ENCODE measurements at regions of chr11 and their contacts with region 1.

Region 1: GRCh38 chr11:18775492-18776292 is 15.9 kb downstream of the PTPN5 start:
- DNase-seq: peak; percentile 48
- H3K4me3 Mint-ChIP-seq: no peak overlapping the region
- H3K27ac Mint-ChIP-seq: no peak overlapping the region
- H3K4me1 Mint-ChIP-seq: peaks cover 23% of the 10 kb centered on the region
- H3K27me3 Mint-ChIP-seq: no peaks in the 10 kb centered on the region

Region 2: DNA sequence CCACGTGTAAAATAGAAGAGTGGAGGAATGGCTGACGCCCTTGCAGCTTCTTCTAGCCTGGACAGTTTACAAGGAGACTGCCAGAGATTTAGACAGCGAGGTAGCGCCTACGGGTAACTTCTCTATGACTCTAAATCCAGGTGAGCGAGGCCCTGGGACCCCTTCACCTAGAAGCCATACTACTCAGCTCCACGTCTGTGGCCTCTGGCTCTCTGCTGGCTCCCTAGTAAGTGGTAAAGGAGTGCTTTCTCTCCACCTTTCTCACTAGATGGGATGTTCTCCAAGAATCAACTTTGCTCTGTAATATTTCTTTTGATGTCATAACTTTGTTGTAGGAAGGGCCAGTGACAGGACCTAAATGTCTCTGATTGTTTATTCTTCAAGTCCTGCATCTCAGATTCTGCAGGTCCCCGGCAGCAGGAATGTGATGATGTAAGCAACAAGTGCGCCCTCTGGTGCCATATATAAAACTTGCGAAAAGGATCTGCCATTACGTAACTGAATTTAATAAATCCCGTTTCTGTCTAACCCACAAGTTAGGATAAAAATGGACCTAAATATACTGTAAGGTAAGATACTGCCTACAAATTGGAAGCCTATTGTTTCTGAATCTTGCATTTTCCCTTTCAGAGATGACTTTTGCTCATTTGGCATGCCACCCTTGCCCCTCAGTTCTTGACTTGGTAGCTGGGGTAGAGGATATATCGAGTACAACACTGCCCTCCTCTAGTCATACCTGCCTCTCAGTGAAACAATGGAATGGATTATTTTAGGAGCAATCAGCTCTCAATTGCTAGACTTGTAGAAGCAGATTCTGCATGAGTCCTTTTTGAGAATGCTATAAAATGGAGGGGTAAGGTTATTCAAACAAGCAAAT is 26.9 kb after region 1 on chr11:
- intact Hi-C with region 1: loop called (anchors 1 kb)
- DNase-seq: peak; percentile 19
- H3K4me3 Mint-ChIP-seq: no peak overlapping the region
- H3K27ac Mint-ChIP-seq: no peak overlapping the region
- H3K4me1 Mint-ChIP-seq: no peaks in the 10 kb centered on the region
- H3K27me3 Mint-ChIP-seq: peaks cover 38% of the 10 kb centered on the region

Region 3: GRCh38 chr11:18853086-18853720 is 77.5 kb after region 1 on chr11:
- intact Hi-C with region 1: loop called (anchors 5 kb)
- DNase-seq: no peak
- H3K4me3 Mint-ChIP-seq: no peak overlapping the region
- H3K27ac Mint-ChIP-seq: no peak overlapping the region
- H3K4me1 Mint-ChIP-seq: no peaks in the 10 kb centered on the region
- H3K27me3 Mint-ChIP-seq: peaks cover 17% of the 10 kb centered on the region

Measured in activated T-helper 2 cell treated with anti-CD3 and anti-CD28 coated beads, Interferon-gamma antibody, Interleukin-2, Interleukin-4, amounts not matched to agents 10 μg/mL and 5 μg/mL and 100 μg/mL, durations not matched to agents 14 hours and 24 hours and 36 hours (primary cell).